ENCODE measurements at regions of chr10 and their contacts with region 1.

Region 1: DNA sequence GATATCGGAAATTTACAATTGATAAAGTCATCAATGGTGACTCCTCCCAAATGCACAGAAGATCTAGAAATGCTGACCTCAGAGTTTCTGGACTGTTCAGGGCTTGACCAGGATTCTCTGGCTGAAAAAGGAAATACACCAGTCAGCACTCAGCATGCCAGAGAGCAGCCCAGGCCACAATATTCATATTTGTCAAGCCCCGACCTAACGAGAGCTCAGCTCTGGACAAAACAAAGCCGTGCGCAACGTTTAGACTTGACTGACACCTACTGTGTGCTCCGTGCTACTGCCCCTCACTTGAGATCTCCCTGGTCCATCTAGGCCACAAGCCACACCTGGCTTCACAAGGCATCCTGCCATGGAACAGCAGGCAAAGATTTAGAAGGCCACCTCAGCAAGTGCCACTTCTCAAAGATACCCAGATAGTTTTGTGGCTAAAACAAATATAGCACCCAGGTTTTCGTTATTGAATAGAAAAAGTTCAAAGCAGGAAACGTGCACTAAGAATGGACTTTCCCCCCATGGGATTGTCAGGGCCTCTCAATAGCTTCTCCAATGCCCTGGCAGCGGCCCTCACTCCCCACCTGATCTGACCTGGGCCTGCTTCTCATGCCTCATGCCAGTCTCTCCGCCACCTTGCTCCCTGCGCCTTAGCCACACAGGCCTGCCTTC is 218.3 kb downstream of the FAM107B start:
- DNase-seq: no peak
- ATAC-seq: peak; percentile 49
- H3K4me3 Mint-ChIP-seq: peak overlapping the region; percentile 59
- H3K27ac Mint-ChIP-seq: peak overlapping the region; percentile 91
- H3K4me1 Mint-ChIP-seq: peaks cover 96% of the 10 kb centered on the region
- H3K27me3 Mint-ChIP-seq: no peaks in the 10 kb centered on the region
- CTCF ChIP-seq: no peak

Region 2: DNA sequence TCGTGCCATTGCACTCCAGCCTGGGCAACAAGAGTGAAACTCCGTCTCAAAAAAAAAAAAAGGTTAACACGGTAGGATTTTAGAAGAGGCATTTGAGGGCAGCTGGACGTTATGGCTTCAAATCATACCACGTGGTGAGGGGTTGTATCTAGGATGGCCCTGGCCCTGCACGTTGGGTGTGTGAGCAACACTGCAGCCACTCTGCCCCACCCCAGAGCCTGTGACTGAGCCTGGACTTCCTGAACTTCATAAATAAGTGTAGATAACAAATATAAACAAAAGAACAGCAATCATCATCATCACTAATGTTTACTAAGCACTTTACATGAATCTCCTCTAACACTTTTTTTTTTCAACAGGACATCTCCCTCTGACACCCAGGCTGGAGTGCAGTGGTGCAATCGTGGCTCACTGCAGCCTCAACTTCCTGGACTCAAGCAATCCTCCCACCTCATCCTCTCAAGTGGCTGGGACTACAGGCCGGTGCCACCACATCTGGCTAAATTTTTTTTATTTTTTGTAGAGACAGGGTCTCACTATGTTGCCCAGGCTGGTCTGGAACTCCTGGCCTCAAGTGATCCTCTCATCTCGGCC is 56.2 kb before region 1 on chr10:
- CTCF ChIA-PET with region 1: no interaction called
- POLR2A ChIA-PET with region 1: no interaction called
- intact Hi-C with region 1: loop called (anchors 1 kb)
- DNase-seq: no peak
- ATAC-seq: no peak
- H3K4me3 Mint-ChIP-seq: no peak overlapping the region
- H3K27ac Mint-ChIP-seq: no peak overlapping the region
- H3K4me1 Mint-ChIP-seq: peaks cover 18% of the 10 kb centered on the region
- H3K27me3 Mint-ChIP-seq: no peaks in the 10 kb centered on the region
- CTCF ChIP-seq: no peak

Region 3: GRCh38 chr10:14571866-14572507 is 15.6 kb after region 1 on chr10:
- CTCF ChIA-PET with region 1: no interaction called
- POLR2A ChIA-PET with region 1: no interaction called
- intact Hi-C with region 1: loop called (anchors 2 kb)
- DNase-seq: no peak
- ATAC-seq: peak; percentile 78
- H3K4me3 Mint-ChIP-seq: peak overlapping the region; percentile 50
- H3K27ac Mint-ChIP-seq: peak overlapping the region; percentile 70
- H3K4me1 Mint-ChIP-seq: peaks cover 88% of the 10 kb centered on the region
- H3K27me3 Mint-ChIP-seq: no peaks in the 10 kb centered on the region
- CTCF ChIP-seq: no peak

Region 4: DNA sequence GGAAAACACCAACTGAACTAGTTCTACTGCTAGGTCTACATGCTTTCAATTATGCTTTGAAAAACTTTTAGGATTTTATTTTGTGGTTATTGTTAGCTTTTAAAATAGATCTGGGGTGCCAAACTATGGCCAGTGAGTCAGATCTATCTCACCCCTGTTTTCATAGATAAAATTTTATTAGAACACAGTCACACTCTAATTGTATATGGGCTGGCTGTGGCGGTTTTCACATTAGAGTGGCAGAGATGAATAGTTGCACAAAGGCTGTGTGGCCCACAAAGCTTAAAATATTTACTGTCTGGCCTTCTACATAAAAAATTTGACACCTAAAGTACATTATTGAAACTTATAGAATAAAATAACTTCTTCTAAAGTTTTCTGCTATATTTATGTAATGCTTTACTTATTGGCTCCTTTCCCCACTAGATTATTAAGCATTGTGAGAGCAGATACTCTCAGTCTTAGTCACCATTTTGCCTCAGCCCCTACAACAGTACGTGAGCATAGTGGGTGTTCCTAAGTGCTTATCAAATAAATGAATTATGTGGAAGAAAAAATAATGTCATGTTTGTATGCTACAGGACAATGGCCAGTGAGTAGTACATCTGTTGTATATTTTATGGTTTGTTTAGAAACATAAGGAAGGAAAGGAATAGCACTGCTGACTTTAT is 316.8 kb after region 1 on chr10:
- CTCF ChIA-PET with region 1: no interaction called
- POLR2A ChIA-PET with region 1: interaction called, 10 read pairs
- intact Hi-C with region 1: no loop called
- DNase-seq: no peak
- ATAC-seq: no peak
- H3K4me3 Mint-ChIP-seq: no peak overlapping the region
- H3K27ac Mint-ChIP-seq: no peak overlapping the region
- H3K4me1 Mint-ChIP-seq: peaks cover 15% of the 10 kb centered on the region
- H3K27me3 Mint-ChIP-seq: no peaks in the 10 kb centered on the region
- CTCF ChIP-seq: no peak